ENCODE measurements at regions of chr7 and their contacts with region 1.

Region 1: DNA sequence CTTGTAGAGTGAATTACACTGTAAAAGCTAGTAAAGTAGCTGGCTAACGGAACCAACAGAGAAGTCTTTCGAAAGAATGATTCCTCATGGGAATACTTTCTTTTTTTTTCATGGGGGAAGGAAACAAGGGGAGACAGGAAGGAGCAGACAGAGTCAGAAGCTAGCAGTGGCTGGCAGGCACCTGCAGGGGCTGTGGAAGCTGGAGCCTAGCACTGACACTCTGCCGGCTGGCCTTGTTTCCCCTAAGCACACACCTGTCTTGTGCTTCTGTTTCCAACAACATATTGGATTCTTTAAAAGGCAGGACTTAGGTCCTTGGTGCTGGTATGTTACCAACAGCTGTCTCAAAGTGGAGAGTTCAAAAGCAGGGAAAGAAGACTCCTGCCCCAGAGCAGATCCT is 24.7 kb downstream of the NOD1 start:
- DNase-seq: peak; percentile 44
- H3K4me3 ChIP-seq: no peak overlapping the region
- H3K27ac ChIP-seq: no peak overlapping the region
- H3K4me1 ChIP-seq: peaks cover 1% of the 10 kb centered on the region
- H3K27me3 ChIP-seq: no peaks in the 10 kb centered on the region
- CTCF ChIP-seq: peak in 1 of 2 donors; percentile 4
- POLR2A ChIP-seq: no peak

Region 2: GRCh38 chr7:30348083-30348560 is 105.8 kb before region 1 on chr7:
- CTCF ChIA-PET with region 1: no interaction called
- POLR2A ChIA-PET with region 1: no interaction called
- dilution Hi-C with region 1: no loop called
- intact Hi-C with region 1: no loop called
- DNase-seq: peak; percentile 76
- H3K4me3 ChIP-seq: no peak overlapping the region
- H3K27ac ChIP-seq: peak overlapping the region; percentile 30
- H3K4me1 ChIP-seq: peaks cover 11% of the 10 kb centered on the region
- H3K27me3 ChIP-seq: no peaks in the 10 kb centered on the region
- CTCF ChIP-seq: no peak
- POLR2A ChIP-seq: no peak

Region 3: DNA sequence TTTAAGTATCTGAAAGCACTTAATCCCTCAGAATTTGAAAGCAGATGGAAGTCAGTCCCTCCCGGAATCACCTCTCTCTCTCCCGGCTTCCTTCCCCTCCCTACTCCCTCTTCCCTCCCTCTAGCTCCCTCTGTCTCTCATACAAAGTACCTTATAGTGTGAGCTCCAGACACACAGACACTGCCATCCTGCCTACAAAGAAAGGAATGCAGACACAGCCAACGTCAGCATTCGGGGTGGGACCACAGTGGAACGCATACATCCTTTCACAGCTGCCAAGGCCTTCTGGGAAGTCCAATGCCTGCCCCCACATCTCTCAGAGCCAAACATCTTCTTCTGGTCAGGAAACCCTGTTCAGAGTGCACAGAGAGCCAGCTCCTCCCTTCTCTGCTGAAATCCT is 15.4 kb after region 1 on chr7:
- CTCF ChIA-PET with region 1: interaction called, 26 read pairs
- POLR2A ChIA-PET with region 1: interaction called, 6 read pairs
- dilution Hi-C with region 1: no loop called
- intact Hi-C with region 1: no loop called
- DNase-seq: peak; percentile 99
- H3K4me3 ChIP-seq: no peak overlapping the region
- H3K27ac ChIP-seq: peak overlapping the region; percentile 93
- H3K4me1 ChIP-seq: peaks cover 60% of the 10 kb centered on the region
- H3K27me3 ChIP-seq: no peaks in the 10 kb centered on the region
- CTCF ChIP-seq: peak; percentile 49 to 52
- POLR2A ChIP-seq: peak; percentile 43

Region 4: DNA sequence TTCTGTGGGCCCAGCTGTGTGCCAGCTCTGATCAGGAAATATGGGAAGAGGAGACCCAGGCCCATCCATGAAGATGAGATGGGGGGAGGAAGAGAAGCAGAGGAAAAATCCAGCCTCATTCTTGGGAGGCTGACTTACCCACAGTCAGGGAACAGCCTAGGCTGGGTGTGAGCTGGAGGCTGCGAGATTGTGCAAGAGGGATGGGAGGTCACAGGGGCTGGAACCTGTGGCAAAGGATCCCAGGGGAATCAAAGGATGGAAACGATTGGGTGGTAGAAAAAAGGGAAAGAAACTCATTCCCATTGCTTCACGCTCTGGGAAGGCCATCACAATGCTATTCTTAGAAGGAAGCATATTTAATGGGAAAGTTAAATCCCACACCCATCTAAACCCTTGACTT is 255.1 kb after region 1 on chr7:
- CTCF ChIA-PET with region 1: no interaction called
- POLR2A ChIA-PET with region 1: no interaction called
- dilution Hi-C with region 1: no loop called
- intact Hi-C with region 1: no loop called
- DNase-seq: no peak
- H3K4me3 ChIP-seq: no peak overlapping the region
- H3K27ac ChIP-seq: no peak overlapping the region
- H3K4me1 ChIP-seq: no peaks in the 10 kb centered on the region
- H3K27me3 ChIP-seq: peaks cover 0 to 3% of the 10 kb centered on the region in 2 experiments
- CTCF ChIP-seq: no peak
- POLR2A ChIP-seq: no peak